ENCODE measurements at regions of chr19 and their contacts with region 1.

Region 1: DNA sequence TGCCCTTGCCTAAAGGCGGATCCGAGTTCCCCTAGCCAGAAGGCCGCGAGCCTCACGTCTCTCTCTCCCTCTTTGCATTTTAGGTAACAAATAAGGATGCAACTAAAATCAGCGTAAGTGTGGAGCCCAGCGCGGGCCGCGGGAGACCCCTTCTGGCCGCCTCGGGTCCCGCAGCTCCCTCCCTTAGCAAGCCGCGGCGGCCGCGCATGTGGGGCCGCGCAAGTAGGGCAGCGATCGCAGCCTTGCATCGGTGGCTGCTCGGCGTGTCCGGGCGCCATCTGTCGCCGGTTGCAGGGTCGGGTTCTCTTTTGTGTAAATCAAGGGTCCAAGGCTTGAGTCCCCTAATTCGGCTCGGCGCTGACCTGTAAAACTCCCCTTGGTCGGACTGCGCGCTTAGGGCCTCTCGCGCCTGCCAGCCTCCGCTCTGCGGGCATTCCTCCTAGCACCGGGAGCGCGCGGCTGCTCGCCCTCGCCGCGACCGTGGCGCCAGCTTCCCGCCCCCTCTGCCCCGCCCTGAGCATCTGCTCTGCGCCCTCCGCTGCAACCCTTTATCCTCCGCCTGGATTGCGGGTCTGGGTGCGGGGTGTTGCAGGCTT is 2.7 kb downstream of the VSTM2B start:
- DNase-seq: peak; percentile 62
- H3K4me3 Mint-ChIP-seq: peak overlapping the region; percentile 60
- H3K27ac Mint-ChIP-seq: peak overlapping the region; percentile 33
- H3K4me1 Mint-ChIP-seq: peaks cover 18% of the 10 kb centered on the region
- H3K27me3 Mint-ChIP-seq: peaks cover 56% of the 10 kb centered on the region

Region 2: GRCh38 chr19:28482221-28482620 is 1046.2 kb before region 1 on chr19:
- intact Hi-C with region 1: no loop called
- DNase-seq: no peak
- H3K4me3 Mint-ChIP-seq: no peak overlapping the region
- H3K27ac Mint-ChIP-seq: no peak overlapping the region
- H3K4me1 Mint-ChIP-seq: peaks cover 2% of the 10 kb centered on the region
- H3K27me3 Mint-ChIP-seq: no peaks in the 10 kb centered on the region

Region 3: GRCh38 chr19:29337029-29337428 is 191.4 kb before region 1 on chr19:
- intact Hi-C with region 1: no loop called
- DNase-seq: no peak
- H3K4me3 Mint-ChIP-seq: no peak overlapping the region
- H3K27ac Mint-ChIP-seq: no peak overlapping the region
- H3K4me1 Mint-ChIP-seq: no peaks in the 10 kb centered on the region
- H3K27me3 Mint-ChIP-seq: no peaks in the 10 kb centered on the region

Region 4: DNA sequence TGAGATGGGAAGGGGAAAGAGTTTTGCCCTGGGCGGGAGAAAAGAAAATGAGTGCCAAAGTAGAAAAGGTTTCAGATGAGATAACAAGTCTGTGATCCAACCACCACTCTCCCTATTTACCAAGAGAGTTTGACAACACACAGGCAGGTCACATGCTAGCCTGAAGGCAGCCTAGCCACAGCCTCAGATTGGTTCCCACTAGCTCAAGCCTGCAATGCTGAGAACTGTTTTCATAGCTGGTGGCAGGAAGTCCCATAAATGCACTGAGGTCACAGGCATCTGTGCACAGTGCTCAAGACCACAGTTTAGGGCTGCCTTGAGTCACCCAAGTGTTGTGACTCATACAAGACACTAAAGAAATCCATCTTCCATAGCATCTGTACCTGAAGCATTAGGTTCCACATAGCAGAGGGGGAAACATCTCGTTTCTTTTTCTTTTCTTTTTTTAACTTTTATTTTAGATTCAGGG is 59.1 kb after region 1 on chr19:
- intact Hi-C with region 1: loop called (anchors 5 kb)
- DNase-seq: peak; percentile 74
- H3K4me3 Mint-ChIP-seq: no peak overlapping the region
- H3K27ac Mint-ChIP-seq: peak overlapping the region; percentile 62
- H3K4me1 Mint-ChIP-seq: peaks cover 27% of the 10 kb centered on the region
- H3K27me3 Mint-ChIP-seq: peaks cover 21% of the 10 kb centered on the region

Region 5: GRCh38 chr19:29724102-29724641 is 195.7 kb after region 1 on chr19:
- intact Hi-C with region 1: loop called (anchors 10 kb)
- DNase-seq: no peak
- H3K4me3 Mint-ChIP-seq: peak overlapping the region; percentile 9
- H3K27ac Mint-ChIP-seq: no peak overlapping the region
- H3K4me1 Mint-ChIP-seq: peaks cover 6% of the 10 kb centered on the region
- H3K27me3 Mint-ChIP-seq: peaks cover 30% of the 10 kb centered on the region

Region 6: DNA sequence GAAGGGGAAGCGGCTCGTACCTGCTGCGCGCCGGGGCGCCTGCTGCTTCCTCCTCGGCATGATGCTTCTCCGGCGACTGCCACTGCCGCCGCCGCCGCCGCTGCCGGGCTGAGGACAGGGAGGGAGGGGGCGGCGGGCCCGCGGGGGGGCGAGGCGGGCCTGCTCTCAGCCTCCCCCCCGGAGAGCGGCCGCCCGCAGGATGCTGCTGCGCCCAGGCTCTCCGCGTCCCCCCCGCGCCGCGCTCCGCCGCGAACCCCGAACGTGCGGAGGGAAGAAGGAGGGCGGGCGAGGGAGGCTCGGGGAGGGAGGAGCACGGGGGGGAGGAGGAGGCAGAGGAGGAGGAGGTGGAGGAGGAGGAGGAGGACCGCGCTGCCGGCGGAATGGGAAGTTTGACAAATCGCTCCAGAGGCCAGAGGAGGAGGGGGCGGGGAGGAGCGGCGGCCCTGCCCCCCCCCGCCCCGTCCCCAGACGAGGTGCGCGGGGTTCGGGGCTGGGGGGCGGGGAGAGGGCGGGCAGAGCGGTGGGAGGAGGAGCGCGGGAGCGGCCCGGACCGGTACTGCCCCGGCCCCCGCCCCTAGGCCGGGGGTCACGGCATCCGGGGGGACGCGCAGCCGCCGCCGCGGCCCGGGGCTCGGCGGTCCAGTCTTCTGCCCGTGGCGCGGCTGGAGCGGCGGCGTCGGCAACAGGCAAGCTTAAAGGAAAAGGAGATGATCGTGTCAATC is 1820.9 kb after region 1 on chr19 and contains the start of gene TSHZ3:
- intact Hi-C with region 1: loop called (anchors 5 kb)
- DNase-seq: no peak
- H3K4me3 Mint-ChIP-seq: peak within 1 kb of the TSS; percentile 78
- H3K27ac Mint-ChIP-seq: no peak within 1 kb of the TSS
- H3K4me1 Mint-ChIP-seq: peaks cover 13% of the 10 kb centered on the region
- H3K27me3 Mint-ChIP-seq: peaks cover 63% of the 10 kb centered on the region
- total RNA-seq, gene TSHZ3: 0.66 and 1.3 TPM in 2 replicates